Lower leg skin (tissue), 4 donors: ENCODE measurements at regions of chr10 and their contacts with region 1.

Region 1: GRCh38 chr10:126646110-126646509 is 24.4 kb downstream of the C10orf90 start:
- DNase-seq: no peak
- H3K4me3 ChIP-seq: no peak overlapping the region
- CTCF ChIP-seq: no peak
- POLR2A ChIP-seq: no peak

Region 2: GRCh38 chr10:126690534-126690933 is 44.4 kb after region 1 on chr10:
- intact Hi-C with region 1: no loop called
- DNase-seq: no peak
- H3K4me3 ChIP-seq: no peak overlapping the region
- CTCF ChIP-seq: no peak
- POLR2A ChIP-seq: no peak

Region 3: DNA sequence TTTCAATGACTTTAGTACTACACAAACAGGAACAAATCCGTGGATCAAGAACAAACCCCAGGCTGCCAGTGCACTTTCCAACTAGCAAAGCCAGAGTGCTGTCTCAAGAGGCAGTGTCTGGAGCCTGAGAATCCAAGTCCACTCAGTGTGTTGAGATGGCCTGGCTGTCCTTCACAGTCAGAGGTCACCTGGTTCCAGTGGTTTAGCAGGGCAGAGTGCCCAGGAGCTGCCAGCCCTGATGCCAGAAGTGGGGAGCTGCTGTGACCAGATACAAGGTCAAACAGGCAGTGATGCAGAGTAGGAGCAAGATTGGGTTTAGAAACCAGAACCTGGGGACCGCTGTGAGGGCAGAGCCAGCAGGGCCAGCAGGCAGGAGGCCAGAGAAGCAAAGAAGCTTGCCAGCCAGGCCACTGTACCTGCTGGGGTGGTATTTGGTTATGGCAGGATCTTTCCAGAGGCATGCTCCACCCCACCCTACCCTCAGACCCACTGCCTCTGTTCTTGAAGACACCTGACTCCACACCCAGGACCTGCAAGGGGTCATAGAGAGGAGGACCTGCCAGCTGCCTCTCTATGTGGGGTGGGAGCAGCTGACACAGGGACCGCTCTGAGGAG is 59.9 kb after region 1 on chr10:
- intact Hi-C with region 1: loop called (anchors 2 kb)
- DNase-seq: no peak
- H3K4me3 ChIP-seq: no peak overlapping the region
- CTCF ChIP-seq: no peak
- POLR2A ChIP-seq: no peak